ENCODE measurements at regions of chr18 and their contacts with region 1.

Region 1: DNA sequence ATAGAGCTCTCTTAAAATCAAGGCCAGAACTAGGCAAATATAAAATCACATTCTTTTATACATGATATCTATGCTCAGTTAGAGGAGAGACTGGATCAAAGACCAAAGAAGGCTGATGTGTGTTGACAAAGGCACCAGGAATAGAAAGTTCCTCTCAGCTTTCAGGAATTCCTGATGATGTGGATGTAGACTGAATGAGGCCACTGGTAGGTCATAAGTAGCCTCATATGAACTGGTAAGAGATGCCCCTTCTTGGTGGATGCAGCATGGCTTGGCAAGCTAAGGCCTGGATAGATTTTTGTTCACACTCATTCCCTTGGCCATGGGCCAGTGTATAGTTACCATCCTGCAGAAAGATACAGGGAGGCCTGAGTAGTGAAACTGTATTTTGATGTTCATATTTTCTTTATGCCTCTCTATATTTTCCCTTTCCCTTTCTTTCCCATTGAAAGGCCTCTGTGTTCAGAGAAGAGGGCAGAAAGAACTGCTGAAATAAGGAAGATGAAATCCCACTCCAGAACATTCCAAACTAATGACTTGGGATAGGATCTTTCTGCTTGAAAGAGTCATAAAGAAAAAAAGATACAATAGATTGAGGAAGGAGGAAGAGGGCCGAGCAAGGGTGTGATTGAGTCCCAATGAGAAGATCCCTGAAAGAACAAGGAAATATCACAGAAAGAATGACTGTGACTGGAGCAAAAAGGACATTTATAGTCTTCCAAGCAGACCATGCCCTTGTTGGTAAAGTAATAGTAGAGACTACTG is 2182.7 kb upstream of the PIK3C3 start:
- DNase-seq: no peak
- ATAC-seq: no peak
- H3K4me3 ChIP-seq: no peak overlapping the region
- H3K27ac ChIP-seq: no peak overlapping the region
- H3K4me1 ChIP-seq: no peaks in the 10 kb centered on the region
- H3K27me3 ChIP-seq: no peaks in the 10 kb centered on the region
- CTCF ChIP-seq: no peak
- POLR2A ChIP-seq: no peak

Region 2: DNA sequence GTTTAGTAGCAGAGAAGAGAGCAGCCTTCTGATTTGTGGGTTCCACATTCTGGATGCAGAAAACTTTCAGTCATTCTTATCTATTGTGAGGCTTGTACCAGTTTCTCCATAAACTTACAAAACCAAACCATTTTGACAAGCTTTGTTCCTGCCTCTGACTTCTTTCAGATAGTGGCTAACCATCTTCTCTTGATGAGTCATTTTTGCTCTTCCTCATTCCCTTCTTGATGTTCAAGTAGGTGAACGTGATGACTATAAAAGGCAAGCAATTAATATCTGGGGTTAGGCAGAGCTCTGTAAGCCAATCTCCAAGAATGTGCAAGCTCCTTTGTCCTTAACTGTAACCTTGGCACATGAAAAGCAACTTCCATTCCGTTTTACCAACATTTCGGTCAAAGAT is 99.6 kb after region 1 on chr18:
- in situ Hi-C with region 1: loop called in 1 of 4 experiments (anchors 25 kb)
- intact Hi-C with region 1: no loop called
- DNase-seq: no peak
- ATAC-seq: no peak
- H3K4me3 ChIP-seq: no peak overlapping the region
- H3K27ac ChIP-seq: no peak overlapping the region
- H3K4me1 ChIP-seq: no peaks in the 10 kb centered on the region
- H3K27me3 ChIP-seq: no peaks in the 10 kb centered on the region
- CTCF ChIP-seq: no peak
- POLR2A ChIP-seq: no peak

Region 3: DNA sequence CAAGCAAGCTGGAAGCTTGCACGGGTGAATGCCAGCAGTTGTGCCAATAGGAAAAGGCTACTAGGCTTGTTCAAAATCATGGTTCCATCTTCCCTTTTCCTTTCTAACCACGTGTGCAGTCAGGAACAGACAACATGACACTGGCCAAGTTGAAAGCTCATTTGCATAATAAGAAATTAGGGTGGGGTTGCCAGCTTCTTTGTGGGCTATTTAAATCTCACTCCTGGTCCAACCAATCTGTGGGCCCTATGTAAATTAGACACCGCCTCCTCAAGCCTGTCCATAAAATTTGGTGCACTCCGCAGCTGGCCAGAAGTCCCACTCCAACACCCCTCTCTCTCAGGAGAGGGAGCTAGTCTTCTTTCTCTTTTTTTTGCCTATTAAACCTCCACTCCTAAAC is 234.3 kb after region 1 on chr18:
- in situ Hi-C with region 1: no loop called
- intact Hi-C with region 1: no loop called
- DNase-seq: no peak
- ATAC-seq: no peak
- H3K4me3 ChIP-seq: no peak overlapping the region
- H3K27ac ChIP-seq: no peak overlapping the region
- H3K4me1 ChIP-seq: no peaks in the 10 kb centered on the region
- H3K27me3 ChIP-seq: no peaks in the 10 kb centered on the region
- CTCF ChIP-seq: no peak
- POLR2A ChIP-seq: no peak

Region 4: DNA sequence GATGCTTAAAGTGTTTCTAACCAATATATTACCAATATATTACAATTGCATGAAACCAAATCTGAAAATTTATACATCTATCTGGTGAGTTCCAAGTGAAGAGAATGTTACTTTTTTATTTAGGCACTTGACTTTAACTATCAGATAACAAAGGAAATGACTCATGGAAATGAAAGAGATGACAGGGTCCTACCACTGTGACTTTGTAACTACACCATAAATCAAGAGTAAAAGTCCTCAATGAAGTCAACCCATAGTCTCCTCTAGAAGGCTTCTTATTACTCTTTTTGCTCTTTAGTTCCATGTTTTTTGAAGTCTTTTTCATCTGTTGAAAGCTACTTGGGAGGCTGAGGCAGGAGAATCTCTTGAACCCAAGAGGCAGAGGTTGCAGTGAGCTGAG is 1637.7 kb after region 1 on chr18:
- in situ Hi-C with region 1: no loop called
- intact Hi-C with region 1: no loop called
- DNase-seq: no peak
- ATAC-seq: no peak
- H3K4me3 ChIP-seq: no peak overlapping the region
- H3K27ac ChIP-seq: no peak overlapping the region
- H3K4me1 ChIP-seq: no peaks in the 10 kb centered on the region
- H3K27me3 ChIP-seq: no peaks in the 10 kb centered on the region
- CTCF ChIP-seq: no peak
- POLR2A ChIP-seq: no peak

Measured in gastrocnemius medialis (tissue), 4 donors.